ENCODE measurements at regions of chr10 and their contacts with region 1.

Region 1: DNA sequence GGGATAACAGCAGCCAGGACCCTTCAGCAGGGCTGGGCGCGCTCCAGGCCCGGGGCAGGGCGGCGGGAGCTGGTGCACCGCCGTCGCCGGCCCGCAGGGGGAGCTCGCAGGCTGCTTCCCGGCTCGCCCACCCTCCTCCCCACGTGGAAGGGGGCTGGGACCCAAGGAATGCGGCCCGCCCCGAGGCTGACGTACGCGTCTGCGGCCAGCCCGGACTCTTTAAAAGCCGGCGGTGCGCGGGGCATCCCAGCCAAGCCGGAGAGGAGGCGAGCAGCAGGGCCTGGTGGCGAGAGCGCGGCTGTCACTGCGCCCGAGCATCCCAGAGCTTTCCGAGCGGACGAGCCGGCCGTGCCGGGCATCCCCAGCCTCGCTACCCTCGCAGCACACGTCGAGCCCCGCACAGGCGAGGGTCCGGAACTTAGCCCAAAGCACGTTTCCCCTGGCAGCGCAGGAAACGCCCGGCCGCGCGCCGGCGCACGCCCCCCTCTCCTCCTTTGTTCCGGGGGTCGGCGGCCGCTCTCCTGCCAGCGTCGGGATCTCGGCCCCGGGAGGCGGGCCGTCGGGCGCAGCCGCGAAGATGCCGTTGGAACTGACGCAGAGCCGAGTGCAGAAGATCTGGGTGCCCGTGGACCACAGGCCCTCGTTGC is at the start of gene PFKFB3:
- DNase-seq: peak; percentile 91
- H3K4me3 Mint-ChIP-seq: peak within 1 kb of the TSS; percentile 98
- H3K27ac Mint-ChIP-seq: peak within 1 kb of the TSS; percentile 96
- H3K4me1 Mint-ChIP-seq: peaks cover 42% of the 10 kb centered on the region
- H3K27me3 Mint-ChIP-seq: no peaks in the 10 kb centered on the region
- total RNA-seq, gene PFKFB3: 77.1 to 82.2 TPM

Region 2: DNA sequence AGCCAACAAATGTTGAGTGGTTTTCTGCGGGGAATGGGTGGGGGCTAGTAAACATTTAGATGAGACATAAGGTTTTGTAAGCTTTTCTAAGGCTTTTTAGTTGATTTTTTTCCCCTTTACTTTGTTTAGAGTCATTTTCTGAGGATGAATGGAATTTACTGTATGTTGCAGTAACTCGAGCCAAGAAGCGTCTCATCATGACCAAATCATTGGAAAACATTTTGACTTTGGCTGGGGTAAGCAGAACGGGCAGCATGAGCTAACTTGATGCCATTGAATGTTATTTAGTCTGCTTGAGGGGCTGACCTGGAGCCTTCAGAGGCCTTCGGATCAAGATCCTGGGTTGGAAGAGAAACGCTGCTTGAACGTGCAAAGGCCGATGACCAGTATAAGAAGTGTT is 275.5 kb before region 1 on chr10:
- CTCF ChIA-PET with region 1: no interaction called
- POLR2A ChIA-PET with region 1: no interaction called
- DNase-seq: no peak
- H3K4me3 Mint-ChIP-seq: no peak overlapping the region
- H3K27ac Mint-ChIP-seq: no peak overlapping the region
- H3K4me1 Mint-ChIP-seq: no peaks in the 10 kb centered on the region
- H3K27me3 Mint-ChIP-seq: no peaks in the 10 kb centered on the region

Region 3: DNA sequence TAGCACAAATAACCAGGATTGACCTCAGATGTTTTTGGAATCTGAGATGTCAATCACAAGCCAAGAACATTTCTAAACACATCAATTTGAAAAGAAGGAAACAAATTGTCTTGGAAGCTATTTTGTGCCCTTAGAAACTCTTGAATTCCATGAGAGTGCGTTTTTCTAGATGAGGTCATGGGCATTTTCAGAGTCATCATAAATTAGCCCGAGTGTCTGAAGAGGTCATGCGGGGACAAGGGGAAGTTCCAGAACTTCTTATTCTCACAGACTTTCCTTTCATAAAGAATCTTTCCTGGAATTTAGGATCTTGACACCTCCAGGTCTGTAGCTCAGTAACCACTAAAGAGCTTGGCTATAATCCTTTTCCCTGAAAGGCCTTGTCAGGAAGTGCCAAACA is 168.9 kb before region 1 on chr10:
- CTCF ChIA-PET with region 1: no interaction called
- POLR2A ChIA-PET with region 1: no interaction called
- DNase-seq: no peak
- H3K4me3 Mint-ChIP-seq: no peak overlapping the region
- H3K27ac Mint-ChIP-seq: no peak overlapping the region
- H3K4me1 Mint-ChIP-seq: peaks cover 66% of the 10 kb centered on the region
- H3K27me3 Mint-ChIP-seq: no peaks in the 10 kb centered on the region

Region 4: DNA sequence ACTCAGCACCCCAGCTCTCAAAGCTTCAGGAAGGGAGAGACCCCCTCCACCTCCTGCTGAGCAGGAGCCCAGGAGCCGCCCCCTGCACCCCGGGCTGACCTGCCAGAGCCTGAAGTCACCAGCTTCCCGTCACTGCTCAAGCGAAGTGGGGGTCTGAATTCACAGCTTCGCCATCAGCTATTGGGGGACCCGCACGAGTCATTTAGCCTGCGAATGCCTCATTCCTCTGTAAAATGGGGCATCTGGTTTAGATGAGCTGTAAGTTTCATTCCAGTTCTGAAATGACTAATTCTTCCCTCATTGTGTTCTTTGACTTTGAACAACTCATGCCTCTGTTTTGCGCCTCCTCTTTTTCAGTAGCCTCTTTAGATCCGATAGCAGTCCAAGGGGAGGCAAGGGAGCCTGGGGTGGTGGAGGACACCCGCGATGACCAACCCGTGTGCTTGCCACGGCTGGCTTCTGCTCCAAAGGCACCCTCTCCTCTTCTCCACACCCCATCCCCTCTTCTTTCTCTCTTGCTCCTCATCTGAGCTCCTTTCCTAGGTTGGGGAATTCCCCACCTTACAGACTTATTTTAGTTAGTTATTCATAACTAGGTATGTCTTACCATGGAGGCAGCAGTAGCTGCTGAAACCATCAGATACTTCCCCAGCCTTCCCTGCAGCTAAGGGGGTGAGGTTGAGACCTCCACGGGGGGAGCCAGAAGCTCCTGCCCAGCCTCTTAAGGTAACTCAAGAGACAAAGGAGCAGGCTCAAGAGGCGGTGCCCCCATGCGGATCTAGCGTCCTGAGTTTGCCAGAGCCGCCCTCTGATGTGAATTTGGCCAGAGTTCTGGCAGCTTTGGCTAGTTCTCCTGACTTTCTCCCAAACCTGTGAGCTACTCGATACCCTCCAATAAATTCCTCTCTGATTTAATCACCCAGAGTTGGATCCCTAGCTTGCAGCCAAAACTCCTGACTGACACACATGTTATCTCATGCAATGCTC is 66.3 kb before region 1 on chr10:
- CTCF ChIA-PET with region 1: interaction called, 14 read pairs
- POLR2A ChIA-PET with region 1: interaction called, 3 read pairs
- DNase-seq: peak; percentile 24
- H3K4me3 Mint-ChIP-seq: peak overlapping the region; percentile 29
- H3K27ac Mint-ChIP-seq: no peak overlapping the region
- H3K4me1 Mint-ChIP-seq: peaks cover 53% of the 10 kb centered on the region
- H3K27me3 Mint-ChIP-seq: peaks cover 4% of the 10 kb centered on the region

Region 5: GRCh38 chr10:6218692-6219493 is 16.1 kb after region 1 on chr10:
- CTCF ChIA-PET with region 1: interaction called, 10 read pairs
- POLR2A ChIA-PET with region 1: no interaction called
- DNase-seq: no peak
- H3K4me3 Mint-ChIP-seq: no peak overlapping the region
- H3K27ac Mint-ChIP-seq: peak overlapping the region; percentile 36
- H3K4me1 Mint-ChIP-seq: peaks cover 2% of the 10 kb centered on the region
- H3K27me3 Mint-ChIP-seq: no peaks in the 10 kb centered on the region

Region 6: GRCh38 chr10:6275022-6275997 is 72.5 kb after region 1 on chr10:
- CTCF ChIA-PET with region 1: interaction called, 12 read pairs
- POLR2A ChIA-PET with region 1: no interaction called
- DNase-seq: peak; percentile 84
- H3K4me3 Mint-ChIP-seq: peak overlapping the region; percentile 63
- H3K27ac Mint-ChIP-seq: peak overlapping the region; percentile 95
- H3K4me1 Mint-ChIP-seq: peaks cover 76% of the 10 kb centered on the region
- H3K27me3 Mint-ChIP-seq: no peaks in the 10 kb centered on the region

Region 7: GRCh38 chr10:6388261-6388893 is 185.6 kb after region 1 on chr10:
- CTCF ChIA-PET with region 1: interaction called, 11 read pairs
- POLR2A ChIA-PET with region 1: no interaction called
- DNase-seq: no peak
- H3K4me3 Mint-ChIP-seq: no peak overlapping the region
- H3K27ac Mint-ChIP-seq: no peak overlapping the region
- H3K4me1 Mint-ChIP-seq: peaks cover 13% of the 10 kb centered on the region
- H3K27me3 Mint-ChIP-seq: no peaks in the 10 kb centered on the region

Measured in activated CD4-positive, alpha-beta T cell treated with anti-CD3 and anti-CD28 coated beads, Interleukin-2, amount 10 ng/mL, durations not matched to agents 7 days and 5 days (primary cell).